ENCODE measurements at regions of chr11 and their contacts with region 1.

Region 1: GRCh38 chr11:7571640-7572000 is 57.8 kb downstream of the PPFIBP2 start:
- DNase-seq: peak in 1 of 2 donors; percentile 82
- H3K4me3 ChIP-seq: no peak overlapping the region
- H3K27ac ChIP-seq: peak overlapping the region in 1 of 2 donors; percentile 49
- H3K4me1 ChIP-seq: peaks cover 8 to 21% of the 10 kb centered on the region in 2 donors
- H3K27me3 ChIP-seq: no peaks in the 10 kb centered on the region
- CTCF ChIP-seq: peak; percentile 83 to 98 (median 96)

Region 2: DNA sequence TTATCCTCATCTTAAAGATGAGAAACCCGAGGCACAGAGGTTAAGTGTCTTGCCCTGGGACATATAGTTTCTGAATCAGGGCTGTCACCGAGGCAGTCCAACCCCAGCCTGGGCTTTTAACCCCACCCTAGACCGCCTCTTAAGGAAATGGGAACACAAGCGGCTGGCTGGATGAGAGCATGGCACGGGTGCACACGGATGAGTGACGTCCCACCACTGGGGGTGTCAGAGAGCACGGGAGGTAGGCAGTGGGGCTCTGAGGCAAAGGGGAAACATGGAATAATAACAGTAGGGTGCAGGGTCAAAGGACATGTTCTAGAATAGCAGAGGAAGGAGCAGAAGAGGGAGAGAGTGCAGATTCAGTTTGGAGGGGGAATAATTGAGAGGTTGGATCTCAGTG is 35.5 kb before region 1 on chr11:
- intact Hi-C with region 1: no loop called
- DNase-seq: no peak
- H3K4me3 ChIP-seq: no peak overlapping the region
- H3K27ac ChIP-seq: no peak overlapping the region
- H3K4me1 ChIP-seq: no peaks in the 10 kb centered on the region
- H3K27me3 ChIP-seq: no peaks in the 10 kb centered on the region
- CTCF ChIP-seq: no peak

Region 3: DNA sequence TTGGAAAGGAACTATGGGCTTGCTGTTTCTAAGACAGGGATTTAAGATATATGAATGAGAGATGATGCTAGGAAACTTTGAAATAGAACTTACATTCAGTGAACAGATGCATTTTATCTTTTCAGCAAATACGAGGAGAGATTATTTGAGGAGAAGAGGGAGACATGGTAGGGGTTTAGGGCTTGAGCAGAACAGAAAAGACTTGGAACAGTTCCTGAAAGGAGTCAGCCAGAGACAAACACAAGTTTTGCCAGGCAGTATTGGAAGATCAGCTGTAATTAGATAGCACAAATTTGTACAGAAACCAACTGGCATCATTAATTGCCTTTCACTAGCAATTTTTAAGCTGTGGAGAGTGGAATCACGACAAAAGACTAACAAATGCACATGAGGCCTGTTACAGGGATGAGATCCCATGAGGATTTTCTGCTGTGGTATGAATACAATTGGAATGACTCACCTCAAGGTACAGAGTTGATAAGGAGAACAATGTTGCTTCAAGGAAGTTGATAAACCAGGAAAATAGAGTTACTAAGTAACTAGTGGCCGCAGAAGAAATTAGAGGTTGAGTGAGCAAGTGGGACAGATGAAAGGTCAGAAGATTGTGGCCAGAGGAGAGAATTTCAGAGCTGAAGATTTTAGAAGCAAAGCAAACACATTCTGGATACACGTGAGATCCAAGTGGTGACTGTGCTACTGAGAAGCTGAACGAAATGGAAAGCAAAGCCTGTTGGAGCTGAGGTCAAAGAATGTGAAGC is 33.7 kb after region 1 on chr11:
- intact Hi-C with region 1: loop called (anchors 5 kb)
- DNase-seq: no peak
- H3K4me3 ChIP-seq: no peak overlapping the region
- H3K27ac ChIP-seq: peak overlapping the region in 1 of 2 donors; percentile 30
- H3K4me1 ChIP-seq: peaks cover 0 to 2% of the 10 kb centered on the region in 2 donors
- H3K27me3 ChIP-seq: no peaks in the 10 kb centered on the region
- CTCF ChIP-seq: no peak

Region 4: DNA sequence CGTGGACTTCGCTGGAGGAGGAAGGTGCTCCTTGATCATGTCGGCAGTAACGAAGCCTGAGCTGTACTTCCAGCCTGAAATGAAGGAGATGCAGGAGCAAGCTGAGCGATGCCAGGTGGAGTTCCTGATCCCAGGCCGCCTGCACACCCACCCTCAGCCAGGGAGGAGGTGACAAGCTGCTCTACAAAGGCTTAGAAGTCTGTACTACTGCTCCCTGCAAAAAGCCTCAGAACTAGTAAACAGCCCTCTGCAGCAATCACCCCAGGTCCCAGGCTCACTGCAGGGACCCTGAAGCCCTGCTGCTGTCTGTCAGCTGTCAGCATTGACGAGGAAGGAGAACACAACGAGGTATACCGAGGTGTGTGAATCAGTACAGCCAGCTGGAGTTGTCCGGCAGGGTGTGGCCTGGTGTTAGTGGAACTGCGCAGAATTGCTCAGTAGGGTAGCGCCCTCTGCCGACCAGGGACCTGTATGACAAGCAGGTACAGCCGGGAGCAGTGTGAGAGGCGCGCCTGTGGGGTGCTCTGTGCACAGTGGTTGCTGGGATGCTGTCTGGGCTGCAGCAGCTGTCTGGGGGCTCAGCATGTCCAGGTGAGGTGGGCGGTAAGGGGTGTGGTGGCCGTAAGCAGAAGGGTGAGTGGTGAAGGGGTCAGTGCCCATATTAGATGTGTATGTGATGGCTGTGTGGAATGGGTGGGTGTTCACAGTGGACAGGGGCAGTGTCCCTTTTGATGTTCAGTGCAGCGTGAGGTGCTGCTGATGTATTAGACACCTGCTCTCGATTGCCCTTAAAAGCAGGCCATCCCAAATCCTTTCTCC is 94.1 kb after region 1 on chr11:
- intact Hi-C with region 1: loop called (anchors 1 kb)
- DNase-seq: peak; percentile 23 to 90
- H3K4me3 ChIP-seq: no peak overlapping the region
- H3K27ac ChIP-seq: no peak overlapping the region
- H3K4me1 ChIP-seq: no peaks in the 10 kb centered on the region
- H3K27me3 ChIP-seq: no peaks in the 10 kb centered on the region
- CTCF ChIP-seq: peak; percentile 75 to 88 (median 82)

Region 5: DNA sequence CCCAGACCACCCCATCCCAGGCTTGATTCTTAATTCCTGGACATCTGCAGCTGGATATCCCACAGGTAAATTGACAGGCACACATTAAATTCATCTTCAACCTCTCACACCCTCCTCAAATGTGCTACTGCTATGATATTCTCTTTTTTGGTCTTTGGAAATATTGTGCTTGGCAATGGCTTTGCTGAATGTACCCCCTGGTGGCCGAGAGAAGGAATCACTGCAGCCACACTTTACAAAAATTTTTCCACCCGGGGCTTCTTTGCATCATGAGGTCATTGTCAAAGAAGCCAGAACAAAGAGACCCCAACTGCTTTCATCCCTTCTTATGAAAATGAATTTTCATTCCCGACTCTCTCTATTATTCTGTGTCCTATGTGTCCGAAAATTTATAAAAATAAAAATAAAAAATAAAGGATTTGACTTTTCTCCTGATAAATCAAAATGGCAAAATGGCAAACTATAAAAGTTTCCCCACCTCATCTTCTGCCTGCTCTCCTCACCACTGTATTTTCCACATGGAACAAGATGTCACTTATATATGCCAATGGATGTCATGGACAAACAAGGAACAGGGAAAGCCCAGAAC is 116.7 kb after region 1 on chr11:
- intact Hi-C with region 1: loop called (anchors 2 kb)
- DNase-seq: no peak
- H3K4me3 ChIP-seq: no peak overlapping the region
- H3K27ac ChIP-seq: no peak overlapping the region
- H3K4me1 ChIP-seq: peaks cover 0 to 2% of the 10 kb centered on the region in 2 donors
- H3K27me3 ChIP-seq: no peaks in the 10 kb centered on the region
- CTCF ChIP-seq: peak; percentile 52 to 78 (median 68)

Region 6: DNA sequence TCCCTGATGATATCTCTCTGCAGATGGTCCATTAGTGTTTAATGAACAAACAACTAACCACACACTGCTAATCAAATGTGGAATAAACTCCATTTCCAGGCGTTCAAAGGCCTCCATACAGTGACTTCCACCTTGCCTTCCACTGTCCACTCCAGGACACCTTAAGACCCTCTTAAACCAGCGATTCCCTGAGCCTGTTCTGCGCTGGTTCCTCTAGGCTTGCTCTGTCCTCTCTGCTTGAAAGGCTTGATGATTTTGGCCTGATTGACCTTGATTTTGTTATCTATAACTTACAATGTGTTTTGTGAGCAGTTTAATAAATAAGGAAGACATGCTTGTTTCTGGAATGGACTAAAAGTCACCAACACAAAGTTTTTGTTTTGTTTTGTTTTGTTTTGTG is 122.6 kb after region 1 on chr11:
- intact Hi-C with region 1: loop called (anchors 2 kb)
- DNase-seq: no peak
- H3K4me3 ChIP-seq: peak overlapping the region; percentile 9 to 38
- H3K27ac ChIP-seq: no peak overlapping the region
- H3K4me1 ChIP-seq: no peaks in the 10 kb centered on the region
- H3K27me3 ChIP-seq: no peaks in the 10 kb centered on the region
- CTCF ChIP-seq: no peak

Measured in ascending aorta (tissue), 2 donors.